Naive thymus-derived CD8-positive, alpha-beta T cell (primary cell): ENCODE measurements at regions of chr18 and their contacts with region 1.

Region 1: DNA sequence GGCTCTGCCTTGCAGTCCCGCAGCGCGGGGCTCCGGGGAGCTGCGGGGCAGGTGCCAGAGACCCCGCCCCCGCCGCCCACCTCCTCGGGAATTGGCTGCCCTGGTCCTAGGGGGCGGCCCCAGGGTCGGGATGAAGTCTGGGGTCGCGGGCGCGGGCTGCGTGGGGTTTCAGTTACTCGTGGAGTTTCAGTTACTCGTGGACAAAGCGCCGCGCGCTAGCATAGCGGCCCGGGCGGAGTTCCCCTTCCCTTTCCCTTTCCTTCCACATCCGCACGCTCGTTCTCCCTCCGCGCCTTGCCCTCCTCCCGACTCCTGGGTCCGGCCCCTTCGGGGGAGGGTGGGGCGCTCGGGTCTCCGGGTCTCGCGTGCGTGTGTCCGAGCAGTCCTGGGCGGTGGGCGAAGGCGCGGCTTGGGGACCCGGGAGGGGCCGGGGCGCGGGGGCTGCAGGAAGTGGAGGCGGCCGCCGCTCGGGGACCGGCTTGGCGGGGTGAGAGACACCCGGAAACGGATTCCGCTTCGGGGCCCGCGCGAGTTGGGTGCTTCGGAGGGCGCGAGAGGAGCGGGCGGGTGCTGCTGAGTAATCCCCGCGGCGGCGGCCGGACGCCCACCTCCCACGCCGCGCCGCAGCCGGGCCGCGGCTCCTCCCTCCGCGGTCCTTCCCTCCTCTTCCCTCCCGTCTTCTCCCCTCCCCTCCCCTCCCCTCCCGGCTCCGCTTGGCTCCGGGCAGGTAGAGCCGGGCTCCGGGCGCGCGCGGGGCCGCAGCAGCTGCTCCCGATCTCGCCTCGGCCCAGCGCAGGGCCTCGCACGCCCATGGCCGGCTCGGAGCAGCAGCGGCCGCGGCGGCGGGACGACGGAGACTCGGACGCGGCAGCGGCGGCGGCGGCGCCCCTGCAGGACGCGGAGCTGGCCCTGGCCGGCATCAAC is at the start of gene TTC39C:
- DNase-seq: peak; percentile 61 to 84 (median 73)
- ATAC-seq: peak; percentile 59 to 65
- H3K4me3 Mint-ChIP-seq: peak within 1 kb of the TSS; percentile 92 to 99 (median 95)
- H3K27ac Mint-ChIP-seq: peak within 1 kb of the TSS; percentile 93 to 99 (median 94)
- H3K4me1 Mint-ChIP-seq: peaks cover 45 to 84% (median 78%) of the 10 kb centered on the region in 4 donors
- H3K27me3 Mint-ChIP-seq: no peaks in the 10 kb centered on the region
- polyA plus RNA-seq, gene TTC39C: 36.5 to 60.6 (median 39.3) TPM

Region 2: GRCh38 chr18:23912356-23912755 is 102.0 kb before region 1 on chr18:
- POLR2A ChIA-PET with region 1: no interaction called
- DNase-seq: no peak
- ATAC-seq: no peak
- H3K4me3 Mint-ChIP-seq: no peak overlapping the region
- H3K27ac Mint-ChIP-seq: no peak overlapping the region
- H3K4me1 Mint-ChIP-seq: no peaks in the 10 kb centered on the region
- H3K27me3 Mint-ChIP-seq: no peaks in the 10 kb centered on the region

Region 3: GRCh38 chr18:23967321-23968089 is 46.8 kb before region 1 on chr18:
- POLR2A ChIA-PET with region 1: interaction called, 12 read pairs
- DNase-seq: peak in 3 of 10 donors; percentile 9 to 44 (median 13)
- ATAC-seq: no peak
- H3K4me3 Mint-ChIP-seq: peak overlapping the region in 8 of 10 donors; percentile 4 to 79 (median 46)
- H3K27ac Mint-ChIP-seq: peak overlapping the region in 7 of 10 donors; percentile 52 to 91 (median 76)
- H3K4me1 Mint-ChIP-seq: peaks cover 42 to 84% (median 79%) of the 10 kb centered on the region in 4 donors
- H3K27me3 Mint-ChIP-seq: no peaks in the 10 kb centered on the region

Region 4: DNA sequence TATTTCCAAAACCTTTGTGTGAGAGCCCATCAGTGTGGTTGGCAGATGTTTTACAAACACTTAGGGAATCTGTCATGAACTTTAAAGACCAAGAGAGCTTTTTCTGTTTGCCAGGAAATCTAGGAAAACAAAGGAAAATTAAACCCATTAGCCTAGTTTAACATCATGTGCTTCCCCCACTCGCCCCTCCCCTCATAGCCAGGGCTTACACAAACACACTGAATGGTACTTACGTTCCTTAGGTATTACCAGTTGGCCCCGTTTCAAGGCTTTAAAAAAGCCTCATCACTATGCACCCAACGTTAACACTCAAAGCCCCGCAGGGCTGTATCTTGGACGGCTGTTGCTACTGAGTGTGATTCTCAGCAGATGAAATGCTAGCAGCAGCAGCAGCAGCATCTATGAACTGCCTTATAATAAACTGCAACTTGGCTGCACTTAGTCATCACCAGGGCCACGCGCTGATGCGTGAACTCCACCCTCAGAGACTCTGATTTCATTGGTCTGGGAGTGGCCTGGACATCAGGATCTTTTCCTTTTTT is 19.9 kb before region 1 on chr18:
- POLR2A ChIA-PET with region 1: interaction called, 19 read pairs
- DNase-seq: peak in 1 of 10 donors; percentile 17
- ATAC-seq: no peak
- H3K4me3 Mint-ChIP-seq: peak overlapping the region in 8 of 10 donors; percentile 3 to 82 (median 68)
- H3K27ac Mint-ChIP-seq: peak overlapping the region; percentile 28 to 90 (median 79)
- H3K4me1 Mint-ChIP-seq: peaks cover 6 to 54% (median 48%) of the 10 kb centered on the region in 4 donors
- H3K27me3 Mint-ChIP-seq: no peaks in the 10 kb centered on the region

Region 5: GRCh38 chr18:24176727-24177416 is 162.5 kb after region 1 on chr18:
- POLR2A ChIA-PET with region 1: no interaction called
- DNase-seq: peak in 7 of 10 donors; percentile 3 to 33 (median 9)
- ATAC-seq: no peak
- H3K4me3 Mint-ChIP-seq: peak overlapping the region in 1 of 10 donors; percentile 52
- H3K27ac Mint-ChIP-seq: peak overlapping the region in 1 of 10 donors; percentile 75
- H3K4me1 Mint-ChIP-seq: peaks cover 0 to 7% (median under 1%) of the 10 kb centered on the region in 4 donors
- H3K27me3 Mint-ChIP-seq: peaks cover 0 to 4% (median 0%) of the 10 kb centered on the region in 5 donors

Region 6: GRCh38 chr18:24262087-24262486 is 247.8 kb after region 1 on chr18:
- POLR2A ChIA-PET with region 1: no interaction called
- DNase-seq: no peak
- ATAC-seq: no peak
- H3K4me3 Mint-ChIP-seq: no peak overlapping the region
- H3K27ac Mint-ChIP-seq: peak overlapping the region in 1 of 10 donors; percentile 5
- H3K4me1 Mint-ChIP-seq: no peaks in the 10 kb centered on the region
- H3K27me3 Mint-ChIP-seq: peaks cover 0 to 6% (median 0%) of the 10 kb centered on the region in 5 donors